Left cardiac atrium (tissue), 4 donors: ENCODE measurements at regions of chr15 and their contacts with region 1.

Region 1: DNA sequence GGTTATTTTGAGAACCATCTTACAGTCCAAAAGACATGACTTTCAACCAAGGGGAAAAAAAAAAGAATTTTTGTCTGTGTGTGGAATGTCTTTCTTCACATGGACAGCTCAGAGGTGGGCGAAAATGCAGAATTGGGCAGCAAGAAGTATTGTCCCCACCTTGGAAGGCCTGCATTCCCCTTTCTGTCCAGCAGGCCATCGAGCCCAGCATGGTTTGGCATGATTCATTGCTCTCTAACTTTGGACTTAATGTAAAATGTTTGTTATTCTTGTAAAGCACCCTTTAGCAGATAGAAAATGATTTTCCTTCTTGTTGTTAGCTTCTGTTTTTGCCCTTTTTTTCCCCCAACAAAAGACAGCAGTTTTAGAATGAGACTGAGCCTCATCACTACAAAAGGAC is 12.4 kb downstream of the MYO1E start:
- DNase-seq: no peak
- ATAC-seq: no peak

Region 2: DNA sequence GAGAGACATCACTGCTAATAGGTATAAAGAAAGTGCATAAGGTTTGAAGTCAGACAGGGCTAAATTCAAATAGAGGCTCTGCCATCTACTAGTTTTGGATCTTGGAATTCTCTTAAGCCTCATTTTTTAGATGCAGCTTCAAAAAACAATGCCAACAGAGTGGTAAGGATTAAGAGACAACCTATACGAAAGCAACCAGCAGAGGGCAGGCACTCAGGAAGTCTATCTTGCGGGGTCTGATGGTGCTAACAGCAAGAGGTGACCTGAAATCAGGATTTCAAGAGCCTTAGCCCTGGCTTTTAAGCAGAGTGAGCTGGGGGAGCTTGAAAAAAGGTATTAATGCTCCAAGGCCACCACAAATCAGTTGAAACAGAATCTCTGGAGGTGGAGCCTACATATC is 112.9 kb before region 1 on chr15:
- intact Hi-C with region 1: loop called in 1 of 2 experiments (anchors 10 kb)
- DNase-seq: peak; percentile 59
- ATAC-seq: peak; percentile 70 to 81

Region 3: GRCh38 chr15:59410391-59410896 is 50.1 kb after region 1 on chr15:
- intact Hi-C with region 1: no loop called
- DNase-seq: no peak
- ATAC-seq: peak in 1 of 2 donors; percentile 60